Activated CD8-positive, alpha-beta T cell treated with anti-CD3 and anti-CD28 coated beads for 36 hours (primary cell): ENCODE measurements at regions of chr4 and their contacts with region 1.

Region 1: GRCh38 chr4:128574706-128575105 is 234.8 kb upstream of the JADE1 start:
- DNase-seq: peak; percentile 88
- ATAC-seq: peak; percentile 66
- H3K4me3 Mint-ChIP-seq: no peak overlapping the region
- H3K27ac Mint-ChIP-seq: no peak overlapping the region
- H3K4me1 Mint-ChIP-seq: no peaks in the 10 kb centered on the region
- H3K27me3 Mint-ChIP-seq: peaks cover 10% of the 10 kb centered on the region
- CTCF ChIP-seq: peak; percentile 70

Region 2: DNA sequence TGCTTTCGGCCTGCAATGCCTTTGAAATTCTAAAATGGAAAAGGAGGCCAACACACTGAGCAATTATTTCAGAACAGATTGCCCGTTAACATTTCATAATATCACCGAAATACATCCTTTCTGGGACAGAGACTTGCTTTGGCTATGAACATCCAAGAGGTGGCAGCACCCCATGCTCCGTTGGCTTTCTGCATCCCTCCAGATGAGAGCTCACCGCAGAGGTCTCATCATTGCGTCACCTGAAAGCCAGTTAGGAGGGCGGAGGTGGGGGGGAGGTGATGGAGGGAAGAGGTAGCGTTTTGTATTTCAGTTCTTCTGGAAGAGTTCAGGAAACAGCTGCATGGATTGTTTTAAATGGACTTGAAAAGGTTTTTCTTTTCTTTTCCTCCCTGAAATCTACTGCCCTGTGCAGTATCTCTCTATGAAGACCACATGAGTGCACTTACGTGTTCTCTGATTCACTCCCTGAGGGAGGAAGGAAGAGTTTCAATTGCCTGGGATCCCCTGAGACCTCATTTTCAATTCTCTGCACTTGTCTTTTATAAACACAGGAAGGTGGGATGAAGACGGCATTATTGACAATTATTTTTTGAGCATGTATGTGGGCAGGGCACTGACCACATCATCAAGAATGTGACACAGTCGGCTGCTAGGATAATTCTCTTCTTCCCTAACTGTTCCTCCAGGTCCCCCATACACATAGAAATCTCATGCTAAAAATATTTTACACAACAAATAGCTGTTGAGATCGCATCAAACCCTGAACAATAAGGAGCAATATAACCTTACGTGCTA is 120.2 kb before region 1 on chr4:
- CTCF ChIA-PET with region 1: interaction called, 10 read pairs
- POLR2A ChIA-PET with region 1: no interaction called
- intact Hi-C with region 1: no loop called
- DNase-seq: peak; percentile 88
- ATAC-seq: peak; percentile 99
- H3K4me3 Mint-ChIP-seq: no peak overlapping the region
- H3K27ac Mint-ChIP-seq: no peak overlapping the region
- H3K4me1 Mint-ChIP-seq: peaks cover 12% of the 10 kb centered on the region
- H3K27me3 Mint-ChIP-seq: peaks cover 3% of the 10 kb centered on the region
- CTCF ChIP-seq: peak; percentile 67

Region 3: DNA sequence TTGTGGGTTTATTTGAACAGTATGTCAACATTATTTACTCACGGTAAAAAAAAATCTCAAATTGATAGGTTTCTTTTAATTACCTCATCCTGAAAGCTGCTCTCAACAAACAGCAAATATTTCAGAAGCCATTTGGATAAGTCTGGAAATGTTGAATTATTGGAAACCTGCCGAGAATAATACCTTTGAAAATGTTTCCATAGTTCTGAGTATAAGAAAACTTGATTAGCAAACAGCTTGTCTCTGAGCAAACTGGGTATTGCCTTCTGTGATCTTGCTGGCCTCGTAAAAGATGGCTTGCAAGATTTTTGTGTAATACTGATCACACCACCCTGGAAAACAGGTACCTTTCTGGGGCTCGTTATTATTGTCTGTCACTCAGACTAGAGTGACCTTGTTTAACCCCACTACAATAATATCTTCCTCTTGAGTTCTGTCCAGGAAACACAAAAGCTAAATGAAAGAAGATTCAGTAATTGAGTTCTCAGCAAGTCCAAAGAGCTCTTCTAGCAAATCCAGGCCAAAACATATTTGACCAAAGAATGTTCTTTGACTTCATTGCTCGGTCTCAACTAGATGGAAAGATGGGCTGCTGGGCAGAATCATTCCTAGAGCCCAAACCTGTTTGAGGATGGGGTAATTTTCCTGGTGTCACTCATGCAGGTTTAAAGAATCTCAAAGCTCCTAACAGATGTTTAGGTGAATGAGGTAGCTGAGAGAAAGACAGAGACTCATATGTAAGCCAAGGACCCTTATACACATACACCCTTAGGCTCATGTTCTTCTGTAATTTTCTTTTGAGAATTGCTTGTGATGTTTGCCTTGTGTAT is 20.8 kb before region 1 on chr4:
- CTCF ChIA-PET with region 1: interaction called, 18 read pairs
- POLR2A ChIA-PET with region 1: no interaction called
- intact Hi-C with region 1: no loop called
- DNase-seq: no peak
- ATAC-seq: no peak
- H3K4me3 Mint-ChIP-seq: peak overlapping the region; percentile 78
- H3K27ac Mint-ChIP-seq: no peak overlapping the region
- H3K4me1 Mint-ChIP-seq: peaks cover 10% of the 10 kb centered on the region
- H3K27me3 Mint-ChIP-seq: peaks cover 19% of the 10 kb centered on the region
- CTCF ChIP-seq: no peak

Region 4: GRCh38 chr4:128560754-128561495 is 13.8 kb before region 1 on chr4:
- CTCF ChIA-PET with region 1: interaction called, 13 read pairs
- POLR2A ChIA-PET with region 1: no interaction called
- intact Hi-C with region 1: no loop called
- DNase-seq: no peak
- ATAC-seq: no peak
- H3K4me3 Mint-ChIP-seq: no peak overlapping the region
- H3K27ac Mint-ChIP-seq: no peak overlapping the region
- H3K4me1 Mint-ChIP-seq: no peaks in the 10 kb centered on the region
- H3K27me3 Mint-ChIP-seq: peaks cover 12% of the 10 kb centered on the region
- CTCF ChIP-seq: no peak